Heart left ventricle (tissue), 16 donors: ENCODE measurements at regions of chr20 and their contacts with region 1.

Region 1: DNA sequence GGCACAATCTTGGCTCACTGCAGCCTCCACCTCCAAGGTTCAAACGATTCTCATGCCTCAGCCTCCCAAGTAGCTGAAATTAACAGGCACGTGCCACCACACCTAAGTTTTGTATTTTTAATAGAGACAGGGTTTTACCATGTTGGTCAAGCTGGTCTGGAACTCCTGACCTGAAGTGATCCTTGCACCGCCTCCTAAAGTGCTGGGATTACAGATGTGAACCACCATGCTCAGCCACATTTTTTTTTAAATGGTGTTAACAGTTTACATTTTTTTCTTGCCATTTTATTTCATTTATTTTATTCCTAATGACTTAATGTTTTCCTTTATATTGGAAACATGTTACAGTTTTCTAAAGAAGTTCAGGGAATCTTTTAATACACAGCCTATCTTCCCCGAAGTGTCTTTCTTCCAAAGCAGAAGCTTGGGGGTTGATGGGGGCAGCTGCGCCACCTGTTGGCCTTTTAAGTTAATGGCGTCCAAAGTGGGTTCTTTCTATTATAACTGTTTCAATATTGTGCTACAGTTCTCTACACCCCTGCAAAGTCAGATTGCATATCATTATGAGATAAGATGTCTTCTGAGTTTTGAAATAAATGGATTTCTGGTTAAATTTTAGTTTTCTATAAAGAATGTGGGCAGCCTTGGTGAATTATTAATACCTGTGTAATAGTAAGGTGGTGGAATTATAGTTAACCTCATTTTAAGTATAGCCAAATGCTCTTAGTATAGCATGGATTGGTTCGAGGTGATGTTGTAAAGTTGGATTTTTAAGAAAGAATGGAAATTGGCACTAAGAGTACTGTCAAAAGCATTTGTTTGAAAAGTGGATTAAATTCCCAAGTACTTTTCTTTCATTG is 42.0 kb upstream of the PLCG1 start:
- DNase-seq: peak; percentile 38 to 72 (median 54)
- ATAC-seq: peak in 3 of 4 donors; percentile 34 to 77 (median 71)
- H3K4me3 ChIP-seq: no peak overlapping the region
- H3K27ac ChIP-seq: no peak overlapping the region
- H3K4me1 ChIP-seq: peaks cover 0 to 12% (median 0%) of the 10 kb centered on the region in 12 donors
- H3K27me3 ChIP-seq: no peaks in the 10 kb centered on the region
- CTCF ChIP-seq: peak; percentile 83 to 94 (median 86)
- POLR2A ChIP-seq: no peak

Region 2: GRCh38 chr20:40970201-40970600 is 125.1 kb before region 1 on chr20:
- intact Hi-C with region 1: loop called (anchors 1 to 5 kb)
- DNase-seq: no peak
- ATAC-seq: no peak
- H3K4me3 ChIP-seq: no peak overlapping the region
- H3K27ac ChIP-seq: no peak overlapping the region
- H3K4me1 ChIP-seq: peaks cover 0 to 8% (median 0%) of the 10 kb centered on the region in 12 donors
- H3K27me3 ChIP-seq: no peaks in the 10 kb centered on the region
- CTCF ChIP-seq: no peak
- POLR2A ChIP-seq: no peak

Region 3: DNA sequence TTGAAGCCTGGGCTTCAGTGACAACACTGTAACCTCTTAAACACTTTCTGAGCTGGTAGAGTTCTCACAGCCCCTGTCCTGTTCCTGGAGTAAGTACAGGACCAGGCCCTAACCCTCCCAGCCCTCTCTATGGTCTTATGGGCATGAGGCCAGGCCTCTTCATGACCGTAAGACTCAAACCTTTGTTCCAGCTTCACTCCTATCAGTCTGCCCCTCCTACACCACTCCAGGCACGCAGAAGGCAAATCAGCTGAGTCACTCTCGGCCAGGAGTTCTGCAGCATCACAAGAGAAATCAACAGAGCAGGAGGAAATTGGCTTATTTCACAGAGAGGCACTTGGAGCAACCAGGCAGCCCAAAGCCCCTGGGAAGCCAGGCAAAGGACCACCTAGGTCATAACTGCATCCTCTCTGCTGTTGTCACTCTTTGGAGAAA is 548.2 kb after region 1 on chr20:
- intact Hi-C with region 1: no loop called
- DNase-seq: peak in 3 of 5 donors; percentile 11 to 52 (median 28)
- ATAC-seq: peak in 3 of 4 donors; percentile 49 to 80 (median 76)
- H3K4me3 ChIP-seq: no peak overlapping the region
- H3K27ac ChIP-seq: no peak overlapping the region
- H3K4me1 ChIP-seq: peaks cover 0 to 8% (median 0%) of the 10 kb centered on the region in 12 donors
- H3K27me3 ChIP-seq: no peaks in the 10 kb centered on the region
- CTCF ChIP-seq: no peak
- POLR2A ChIP-seq: no peak